ENCODE measurements at regions of chr15 and their contacts with region 1.

Region 1: DNA sequence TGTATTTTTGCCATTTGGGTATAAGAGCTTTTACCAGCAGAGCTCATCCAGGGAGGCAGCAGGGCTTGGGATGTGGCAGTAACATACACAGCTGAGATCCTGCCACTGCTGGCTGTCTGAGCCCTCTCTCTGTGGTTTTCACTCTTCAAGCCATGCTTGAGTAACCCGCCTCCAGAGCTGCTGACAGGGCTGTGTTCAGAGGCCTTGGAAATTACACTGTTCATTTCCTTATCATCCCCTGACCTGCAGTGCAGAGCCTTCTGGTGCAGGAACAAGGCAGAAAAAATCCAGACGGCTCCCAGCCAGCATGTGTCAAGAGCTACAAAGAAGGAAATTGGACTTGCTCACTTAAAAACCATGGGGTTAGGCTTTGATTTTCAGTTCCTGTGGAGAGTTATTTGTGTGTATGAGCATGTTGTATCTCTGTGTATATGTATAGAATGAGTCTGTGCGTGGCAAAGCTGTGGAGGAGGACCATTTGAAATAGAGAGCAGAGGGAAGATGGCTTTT is 47.0 kb downstream of the ZNF609 start:
- DNase-seq: peak in 8 of 9 donors; percentile 14 to 46 (median 31)
- ATAC-seq: peak; percentile 76
- H3K4me3 ChIP-seq: peak overlapping the region; percentile 15
- H3K4me3 Mint-ChIP-seq: peak overlapping the region; percentile 25 to 79 (median 65)
- H3K27ac ChIP-seq: peak overlapping the region; percentile 46
- H3K27ac Mint-ChIP-seq: peak overlapping the region; percentile 43 to 97 (median 85)
- H3K4me1 ChIP-seq: peaks cover 27 to 88% of the 10 kb centered on the region in 2 donors
- H3K4me1 Mint-ChIP-seq: peaks cover 37 to 93% (median 81%) of the 10 kb centered on the region in 7 donors
- H3K27me3 ChIP-seq: no peaks in the 10 kb centered on the region
- H3K27me3 Mint-ChIP-seq: no peaks in the 10 kb centered on the region

Region 2: DNA sequence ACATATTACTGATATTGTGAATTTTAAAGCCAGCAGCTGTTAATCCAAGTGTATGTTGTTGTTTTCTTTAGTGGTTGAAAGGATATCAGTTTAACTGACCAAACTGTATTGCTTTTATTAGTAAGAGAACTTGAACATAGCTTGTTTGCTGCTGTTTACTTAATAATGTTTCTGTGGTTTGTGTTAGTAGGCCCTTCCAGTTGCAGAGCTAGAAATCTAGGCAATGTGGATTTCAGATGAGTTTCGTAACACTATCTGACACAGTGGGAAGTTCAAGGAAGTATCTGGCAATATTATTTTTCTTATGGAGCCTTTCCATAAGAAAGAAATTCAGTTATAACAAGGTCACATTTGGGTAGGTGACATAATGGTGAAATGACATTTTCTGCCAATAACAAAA is 28.5 kb before region 1 on chr15:
- CTCF ChIA-PET with region 1: no interaction called
- POLR2A ChIA-PET with region 1: no interaction called
- intact Hi-C with region 1: no loop called
- DNase-seq: no peak
- ATAC-seq: no peak
- H3K4me3 ChIP-seq: no peak overlapping the region
- H3K4me3 Mint-ChIP-seq: peak overlapping the region in 1 of 10 donors; percentile 4
- H3K27ac ChIP-seq: no peak overlapping the region
- H3K27ac Mint-ChIP-seq: peak overlapping the region in 3 of 9 donors; percentile 7 to 58 (median 36)
- H3K4me1 ChIP-seq: peaks cover 0 to 6% of the 10 kb centered on the region in 2 donors
- H3K4me1 Mint-ChIP-seq: peaks cover 34 to 78% (median 62%) of the 10 kb centered on the region in 7 donors
- H3K27me3 ChIP-seq: no peaks in the 10 kb centered on the region
- H3K27me3 Mint-ChIP-seq: no peaks in the 10 kb centered on the region

Region 3: GRCh38 chr15:64490598-64491259 is 16.6 kb before region 1 on chr15:
- CTCF ChIA-PET with region 1: interaction called, 3 read pairs
- POLR2A ChIA-PET with region 1: interaction called, 9 read pairs
- intact Hi-C with region 1: loop called in 1 of 2 experiments (anchors 1 kb)
- DNase-seq: no peak
- ATAC-seq: no peak
- H3K4me3 ChIP-seq: no peak overlapping the region
- H3K4me3 Mint-ChIP-seq: peak overlapping the region in 3 of 10 donors; percentile 12 to 36 (median 30)
- H3K27ac ChIP-seq: no peak overlapping the region
- H3K27ac Mint-ChIP-seq: peak overlapping the region in 8 of 9 donors; percentile 25 to 85 (median 58)
- H3K4me1 ChIP-seq: peaks cover 0 to 28% of the 10 kb centered on the region in 2 donors
- H3K4me1 Mint-ChIP-seq: peaks cover 24 to 80% (median 55%) of the 10 kb centered on the region in 7 donors
- H3K27me3 ChIP-seq: no peaks in the 10 kb centered on the region
- H3K27me3 Mint-ChIP-seq: no peaks in the 10 kb centered on the region

Region 4: DNA sequence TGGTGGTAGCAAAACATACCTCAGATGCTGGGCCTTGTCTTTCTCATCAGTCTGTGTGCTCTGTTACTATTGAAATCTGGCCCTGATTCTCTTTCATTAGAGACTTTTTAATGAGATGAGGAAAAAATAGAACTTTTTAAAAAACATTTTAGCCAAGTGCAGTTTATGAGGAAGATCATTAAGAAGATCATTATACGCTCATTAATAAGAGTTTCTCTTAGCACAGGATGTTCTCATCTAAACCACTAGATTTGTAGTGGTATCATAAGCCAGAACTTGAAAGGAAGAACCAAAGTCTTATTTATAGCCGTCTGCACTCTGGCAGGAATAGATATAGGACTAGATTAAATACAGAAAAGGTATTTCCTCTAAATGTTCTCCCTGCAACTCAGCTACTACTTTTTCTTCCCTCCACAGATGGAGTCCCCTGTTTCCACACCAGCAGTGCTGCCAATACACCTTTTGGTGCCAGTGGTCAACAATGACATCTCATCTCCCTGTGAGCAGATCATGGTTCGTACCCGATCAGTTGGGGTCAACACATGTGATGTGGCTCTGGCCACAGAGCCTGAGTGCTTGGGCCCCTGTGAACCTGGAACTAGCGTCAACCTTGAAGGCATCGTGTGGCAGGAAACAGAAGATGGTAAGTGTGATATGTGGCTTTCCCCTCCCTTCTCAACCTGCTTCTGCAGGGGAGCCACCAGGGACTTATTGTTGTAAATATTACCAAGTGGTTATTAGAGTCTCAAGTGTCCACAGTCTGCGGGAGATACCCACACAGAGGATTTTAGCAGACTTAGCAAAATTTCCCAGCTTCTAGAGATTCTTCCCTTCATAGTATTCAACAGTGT is 115.3 kb after region 1 on chr15:
- CTCF ChIA-PET with region 1: no interaction called
- POLR2A ChIA-PET with region 1: no interaction called
- intact Hi-C with region 1: no loop called
- DNase-seq: peak; percentile 31 to 80 (median 66)
- ATAC-seq: peak; percentile 89
- H3K4me3 ChIP-seq: peak overlapping the region; percentile 46
- H3K4me3 Mint-ChIP-seq: peak overlapping the region; percentile 42 to 90 (median 80)
- H3K27ac ChIP-seq: peak overlapping the region; percentile 55
- H3K27ac Mint-ChIP-seq: peak overlapping the region; percentile 82 to 94 (median 91)
- H3K4me1 ChIP-seq: peaks cover 53 to 92% of the 10 kb centered on the region in 2 donors
- H3K4me1 Mint-ChIP-seq: peaks cover 72 to 98% (median 93%) of the 10 kb centered on the region in 7 donors
- H3K27me3 ChIP-seq: no peaks in the 10 kb centered on the region
- H3K27me3 Mint-ChIP-seq: no peaks in the 10 kb centered on the region

Region 5: DNA sequence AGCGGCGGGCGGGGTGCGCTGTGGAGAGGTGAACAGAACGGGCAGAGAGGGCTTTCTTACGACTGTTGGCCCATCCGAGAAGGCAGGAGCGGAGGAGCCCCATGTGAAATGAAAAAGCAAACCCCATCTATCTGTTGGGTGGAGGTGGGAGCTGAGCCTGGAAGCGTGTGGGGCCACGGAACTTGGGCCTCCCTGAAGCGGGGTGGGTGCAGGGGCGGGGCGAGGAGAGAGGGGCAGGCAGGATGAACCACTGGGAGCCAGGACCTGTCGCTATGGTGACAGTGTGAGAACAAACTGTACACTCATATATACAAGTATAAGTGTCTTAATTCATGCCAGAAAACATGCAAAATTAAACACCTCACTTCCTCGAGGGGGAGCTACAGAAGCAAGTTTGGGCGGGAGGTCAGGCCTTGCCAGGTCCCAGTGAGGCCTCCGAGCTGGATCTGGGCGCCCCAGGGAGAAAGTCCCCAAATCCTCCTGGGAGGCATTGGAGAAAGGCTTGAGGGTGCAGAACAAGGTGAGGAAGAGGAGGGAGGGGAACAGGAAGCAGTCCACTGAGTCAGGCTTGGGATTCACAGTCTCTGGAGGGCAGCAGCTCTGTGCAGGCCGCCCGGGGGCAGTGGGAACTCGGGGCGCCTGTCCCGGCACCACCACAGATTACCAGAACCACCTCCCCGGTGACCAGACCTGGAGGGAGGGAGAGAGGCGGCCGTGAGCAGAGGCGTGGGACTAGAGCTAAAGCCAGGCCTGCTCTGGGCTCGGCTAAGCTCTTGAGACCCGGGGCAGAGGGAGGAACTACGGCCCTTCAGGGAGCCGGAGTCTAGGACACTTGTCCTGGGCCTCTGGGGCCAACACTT is 233.2 kb after region 1 on chr15:
- CTCF ChIA-PET with region 1: no interaction called
- POLR2A ChIA-PET with region 1: no interaction called
- intact Hi-C with region 1: no loop called
- DNase-seq: no peak
- ATAC-seq: no peak
- H3K4me3 ChIP-seq: no peak overlapping the region
- H3K4me3 Mint-ChIP-seq: no peak overlapping the region
- H3K27ac ChIP-seq: no peak overlapping the region
- H3K27ac Mint-ChIP-seq: no peak overlapping the region
- H3K4me1 ChIP-seq: no peaks in the 10 kb centered on the region
- H3K4me1 Mint-ChIP-seq: no peaks in the 10 kb centered on the region
- H3K27me3 ChIP-seq: no peaks in the 10 kb centered on the region
- H3K27me3 Mint-ChIP-seq: no peaks in the 10 kb centered on the region

Region 6: DNA sequence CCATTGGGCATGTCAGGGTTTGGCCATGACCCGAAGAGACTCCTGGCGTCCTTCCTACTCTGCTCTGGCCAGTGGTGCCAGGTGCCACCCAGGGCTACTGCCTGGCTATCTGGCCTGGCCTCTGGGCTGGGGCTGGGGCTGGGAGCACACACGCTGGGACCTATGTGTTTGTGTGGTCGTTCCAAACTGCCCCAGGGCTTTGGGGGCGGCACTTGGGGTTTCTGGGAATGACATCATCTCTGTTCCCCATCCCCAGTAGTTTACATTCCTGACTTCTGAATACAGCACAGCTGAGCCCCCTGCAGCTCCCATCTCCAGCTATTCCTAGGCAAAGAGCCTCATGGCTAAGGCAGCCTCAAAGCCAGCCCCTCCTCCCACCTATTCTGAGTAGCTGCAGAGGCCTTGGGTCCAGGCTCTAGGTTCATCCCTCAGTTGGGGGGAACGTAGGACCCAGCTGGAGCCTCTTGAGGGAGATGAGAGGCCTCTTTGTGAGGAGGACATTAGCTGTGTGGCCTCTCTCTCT is 358.7 kb after region 1 on chr15:
- CTCF ChIA-PET with region 1: no interaction called
- POLR2A ChIA-PET with region 1: no interaction called
- intact Hi-C with region 1: no loop called
- DNase-seq: no peak
- ATAC-seq: no peak
- H3K4me3 ChIP-seq: no peak overlapping the region
- H3K4me3 Mint-ChIP-seq: no peak overlapping the region
- H3K27ac ChIP-seq: no peak overlapping the region
- H3K27ac Mint-ChIP-seq: no peak overlapping the region
- H3K4me1 ChIP-seq: no peaks in the 10 kb centered on the region
- H3K4me1 Mint-ChIP-seq: peaks cover 0 to 19% (median 9%) of the 10 kb centered on the region in 7 donors
- H3K27me3 ChIP-seq: no peaks in the 10 kb centered on the region
- H3K27me3 Mint-ChIP-seq: no peaks in the 10 kb centered on the region

Measured in naive thymus-derived CD4-positive, alpha-beta T cell (primary cell).